Ovary (tissue), 10 donors: ENCODE measurements at regions of chr6 and their contacts with region 1.

Region 1: GRCh38 chr6:35904895-35905785 is 15.8 kb downstream of the SRPK1 start:
- DNase-seq: no peak
- H3K4me3 ChIP-seq: no peak overlapping the region
- H3K27ac ChIP-seq: no peak overlapping the region
- H3K4me1 ChIP-seq: peaks cover 3% of the 10 kb centered on the region
- H3K27me3 ChIP-seq: no peaks in the 10 kb centered on the region
- CTCF ChIP-seq: no peak
- EP300 ChIP-seq: no peak
- POLR2A ChIP-seq: no peak

Region 2: GRCh38 chr6:36599791-36600209 is 694.7 kb after region 1 on chr6:
- intact Hi-C with region 1: loop called in 1 of 4 experiments (anchors 5 kb)
- DNase-seq: peak; percentile 33 to 63 (median 45)
- H3K4me3 ChIP-seq: peak overlapping the region; percentile 20
- H3K27ac ChIP-seq: no peak overlapping the region
- H3K4me1 ChIP-seq: peaks cover 18% of the 10 kb centered on the region
- H3K27me3 ChIP-seq: no peaks in the 10 kb centered on the region
- CTCF ChIP-seq: no peak
- EP300 ChIP-seq: no peak
- POLR2A ChIP-seq: no peak